H1 (cell line): ENCODE measurements at regions of chr11 and their contacts with region 1.

Region 1: DNA sequence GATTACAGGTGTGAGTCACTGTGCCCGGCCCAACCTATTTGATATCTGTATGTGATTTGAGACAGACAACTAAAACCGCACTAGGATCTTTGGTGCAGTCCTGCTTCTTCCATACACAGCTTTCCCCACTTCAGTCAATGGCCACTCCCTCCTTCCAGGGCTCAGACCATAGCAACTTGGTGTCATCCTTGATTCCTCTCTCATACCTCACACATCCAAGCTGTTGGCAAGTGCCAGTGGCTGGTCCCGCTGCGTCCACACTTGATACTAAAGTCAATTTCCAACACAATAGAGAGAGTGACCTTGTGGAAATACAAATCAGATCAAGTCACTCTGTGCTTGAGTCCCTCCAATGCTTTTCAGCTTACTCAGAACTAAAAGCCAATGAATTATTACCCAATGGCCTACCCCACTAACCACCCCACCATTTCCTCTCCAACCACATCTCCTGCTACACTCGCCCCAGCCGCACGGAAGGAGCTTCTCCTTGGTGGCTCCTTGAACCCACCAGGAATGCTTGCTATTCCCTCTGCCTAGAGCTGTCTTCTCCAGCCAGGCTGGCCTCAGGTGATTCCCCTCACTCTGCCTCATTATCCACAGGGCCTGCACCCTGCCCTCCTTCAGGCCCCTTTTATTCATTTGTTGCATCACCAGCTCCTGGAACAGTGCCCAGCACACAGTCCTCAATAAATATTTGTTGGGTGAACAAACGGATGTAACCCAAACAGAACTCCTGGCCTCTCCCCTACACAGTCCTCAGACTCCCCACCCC is 12.9 kb downstream of the ABTB2 start:
- DNase-seq: no peak
- H3K4me3 ChIP-seq: no peak overlapping the region
- H3K27ac ChIP-seq: no peak overlapping the region
- H3K4me1 ChIP-seq: peaks cover 0 to 5% (median 2%) of the 10 kb centered on the region in 4 experiments; a peak in 2 of 7 replicates
- H3K27me3 ChIP-seq: no peaks in the 10 kb centered on the region
- CTCF ChIP-seq: no peak
- EP300 ChIP-seq: no peak
- POLR2A ChIP-seq: no peak
- RAD21 ChIP-seq: no peak

Region 2: DNA sequence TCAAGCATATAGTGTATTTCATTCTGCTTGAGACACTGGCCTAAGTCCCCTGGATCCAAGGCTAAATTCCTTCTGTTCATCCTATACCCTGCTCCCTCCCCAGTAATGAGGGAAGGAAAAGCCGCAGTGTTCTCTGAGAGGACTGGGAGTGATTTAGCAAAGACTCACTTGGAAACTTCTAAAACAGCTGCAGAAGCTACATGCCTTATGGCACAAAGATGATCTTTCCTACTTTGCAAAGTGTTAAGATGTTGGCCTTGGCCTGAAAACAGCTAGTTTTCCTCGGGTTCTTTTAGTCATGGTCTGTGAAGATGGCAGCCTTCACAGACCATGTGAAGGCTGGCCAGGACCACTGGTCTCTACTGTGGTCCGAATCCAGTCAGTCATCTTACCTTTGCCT is 52.8 kb before region 1 on chr11:
- CTCF ChIA-PET with region 1: no interaction called
- POLR2A ChIA-PET with region 1: no interaction called
- DNase-seq: no peak
- H3K4me3 ChIP-seq: no peak overlapping the region
- H3K27ac ChIP-seq: no peak overlapping the region
- H3K4me1 ChIP-seq: no peaks in the 10 kb centered on the region
- H3K27me3 ChIP-seq: no peaks in the 10 kb centered on the region
- CTCF ChIP-seq: no peak
- EP300 ChIP-seq: no peak
- POLR2A ChIP-seq: no peak
- RAD21 ChIP-seq: no peak

Region 3: GRCh38 chr11:34318111-34319037 is 26.6 kb before region 1 on chr11:
- CTCF ChIA-PET with region 1: interaction called, 21 read pairs
- POLR2A ChIA-PET with region 1: no interaction called
- DNase-seq: no peak
- H3K4me3 ChIP-seq: no peak overlapping the region
- H3K27ac ChIP-seq: no peak overlapping the region
- H3K4me1 ChIP-seq: peaks cover 0 to 7% (median 3%) of the 10 kb centered on the region in 4 experiments; a peak in 4 of 7 replicates
- H3K27me3 ChIP-seq: no peaks in the 10 kb centered on the region
- CTCF ChIP-seq: no peak
- EP300 ChIP-seq: no peak
- POLR2A ChIP-seq: no peak
- RAD21 ChIP-seq: no peak